Tibial artery (tissue), 4 donors: ENCODE measurements at regions of chr13 and their contacts with region 1.

Region 1: DNA sequence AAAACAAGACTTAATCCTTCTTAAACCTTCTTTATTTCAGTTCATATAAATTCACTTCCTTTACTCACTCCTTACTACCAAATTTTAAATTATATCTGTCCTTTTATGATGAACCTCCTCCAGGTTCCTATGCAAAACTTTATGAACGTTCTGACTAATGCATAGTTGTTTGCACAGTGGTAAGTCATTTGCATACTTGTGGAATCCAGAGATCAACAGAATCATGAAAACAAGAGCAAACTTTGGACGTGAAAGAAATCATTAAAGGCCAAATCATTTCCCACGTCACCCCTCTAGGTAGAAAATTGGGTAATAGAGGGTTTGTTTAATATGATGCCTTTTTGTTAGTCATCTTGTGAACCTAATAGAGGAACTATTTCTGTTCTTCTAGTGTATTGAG is 32.3 kb upstream of the MYCBP2 start:
- DNase-seq: no peak
- H3K4me3 ChIP-seq: no peak overlapping the region
- H3K27ac ChIP-seq: no peak overlapping the region
- H3K4me1 ChIP-seq: no peaks in the 10 kb centered on the region
- H3K27me3 ChIP-seq: no peaks in the 10 kb centered on the region
- CTCF ChIP-seq: no peak

Region 2: DNA sequence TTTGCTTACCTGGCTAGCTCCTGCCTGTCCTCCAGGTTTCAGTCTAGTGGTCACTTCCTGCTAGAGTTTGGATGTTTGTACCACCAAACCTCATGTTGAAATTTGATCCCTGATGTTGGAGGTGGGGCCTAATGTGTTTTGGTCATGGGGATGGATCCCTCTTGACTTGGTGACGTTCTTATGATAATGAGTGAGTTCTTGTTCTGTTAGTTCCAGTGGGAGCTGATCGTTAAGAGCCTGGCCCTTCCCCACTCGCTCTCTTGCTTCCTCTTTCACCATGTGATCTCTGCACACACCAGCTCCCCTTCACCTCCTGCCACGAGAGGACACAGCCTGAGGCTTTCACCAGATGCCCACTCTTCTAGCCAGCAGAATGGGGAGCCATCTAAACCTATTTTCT is 89.5 kb after region 1 on chr13:
- intact Hi-C with region 1: loop called (anchors 5 kb)
- DNase-seq: no peak
- H3K4me3 ChIP-seq: no peak overlapping the region
- H3K27ac ChIP-seq: no peak overlapping the region
- H3K4me1 ChIP-seq: no peaks in the 10 kb centered on the region
- H3K27me3 ChIP-seq: no peaks in the 10 kb centered on the region
- CTCF ChIP-seq: no peak